ENCODE measurements at regions of chr13 and their contacts with region 1.

Region 1: GRCh38 chr13:107211073-107211472 is 643.1 kb upstream of the ARGLU1 start:
- DNase-seq: peak; percentile 75
- ATAC-seq: peak; percentile 92

Region 2: DNA sequence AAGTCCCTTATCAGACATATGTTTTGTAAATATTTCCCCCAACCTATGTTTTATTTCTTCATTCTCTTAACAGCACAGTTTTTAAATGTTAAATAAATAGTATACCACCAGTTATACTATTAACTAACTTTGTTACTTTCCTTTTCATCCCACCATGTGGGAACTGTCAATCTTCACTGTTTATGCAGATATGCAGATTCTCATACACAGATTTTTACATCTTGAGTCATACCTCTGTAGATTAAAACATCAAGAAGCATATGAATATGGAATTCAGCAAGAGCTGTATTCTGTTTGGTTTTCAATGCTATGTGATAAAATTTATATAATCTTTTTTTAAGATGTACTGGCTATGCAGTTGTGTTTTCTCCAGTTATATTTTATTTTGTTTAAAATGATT is 438.0 kb after region 1 on chr13:
- intact Hi-C with region 1: loop called (anchors 5 kb)
- DNase-seq: no peak
- ATAC-seq: no peak

Region 3: GRCh38 chr13:108155185-108156106 is 944.4 kb after region 1 on chr13:
- intact Hi-C with region 1: loop called (anchors 2 kb)
- DNase-seq: peak; percentile 67
- ATAC-seq: no peak